ENCODE measurements at regions of chr10 and their contacts with region 1.

Region 1: GRCh38 chr10:102678842-102679289 is 34.6 kb downstream of the TRIM8 start:
- DNase-seq: no peak
- H3K4me3 ChIP-seq: no peak overlapping the region
- CTCF ChIP-seq: peak; percentile 76

Region 2: GRCh38 chr10:102629661-102630614 is 48.9 kb before region 1 on chr10:
- in situ Hi-C with region 1: no loop called
- DNase-seq: peak; percentile 66
- H3K4me3 ChIP-seq: no peak overlapping the region
- CTCF ChIP-seq: no peak

Region 3: GRCh38 chr10:102713814-102714620 is 35.2 kb after region 1 on chr10 and contains the start of gene ARL3:
- in situ Hi-C with region 1: loop called (anchors 5 kb)
- DNase-seq: peak; percentile 85
- H3K4me3 ChIP-seq: peak within 1 kb of the TSS; percentile 93
- CTCF ChIP-seq: peak; percentile 38